ENCODE measurements at regions of chr10 and their contacts with region 1.

Region 1: GRCh38 chr10:57759777-57760176 is 507.9 kb downstream of the IPMK start:
- DNase-seq: no peak
- H3K4me3 ChIP-seq: no peak overlapping the region
- H3K27ac ChIP-seq: no peak overlapping the region
- H3K4me1 ChIP-seq: no peaks in the 10 kb centered on the region
- H3K27me3 ChIP-seq: no peaks in the 10 kb centered on the region
- CTCF ChIP-seq: no peak

Region 2: DNA sequence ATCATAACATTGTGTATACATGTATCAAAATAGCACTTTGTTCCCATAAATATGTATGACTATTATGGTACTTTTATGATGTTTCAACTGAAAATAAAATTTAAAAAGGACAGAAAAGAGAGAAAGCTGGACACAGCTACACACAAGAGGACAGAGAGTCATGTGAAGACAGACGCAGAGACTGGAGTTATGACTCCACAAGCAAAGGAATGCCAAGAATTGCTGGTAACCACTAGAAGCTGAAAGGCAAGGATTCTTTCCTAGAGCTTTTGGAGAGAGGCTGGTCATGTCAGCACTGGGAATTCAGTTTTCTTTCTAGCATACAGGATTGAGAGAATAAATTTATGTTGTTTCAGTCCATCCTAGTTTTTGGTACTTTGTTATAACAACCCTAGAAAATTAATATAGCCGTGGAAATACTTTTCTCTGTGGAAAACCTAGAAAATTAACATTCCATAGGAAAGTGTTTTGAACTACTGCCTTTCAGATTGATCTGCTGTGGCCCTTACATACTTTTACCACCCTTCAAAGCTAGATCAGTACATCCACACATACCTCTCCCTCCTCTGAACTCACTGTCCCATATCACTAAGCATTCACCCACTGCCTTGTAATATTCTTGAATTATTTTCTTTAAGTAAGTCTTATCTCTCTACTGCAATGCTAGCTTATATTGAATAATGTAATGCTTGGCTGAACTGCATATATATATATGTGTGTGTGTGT is 67.4 kb before region 1 on chr10:
- CTCF ChIA-PET with region 1: no interaction called
- dilution Hi-C with region 1: no loop called
- in situ Hi-C with region 1: no loop called
- intact Hi-C with region 1: no loop called
- DNase-seq: peak; percentile 78
- H3K4me3 ChIP-seq: no peak overlapping the region
- H3K27ac ChIP-seq: peak overlapping the region; percentile 81
- H3K4me1 ChIP-seq: peaks cover 19% of the 10 kb centered on the region
- H3K27me3 ChIP-seq: no peaks in the 10 kb centered on the region
- CTCF ChIP-seq: no peak

Region 3: GRCh38 chr10:57716886-57717285 is 42.9 kb before region 1 on chr10:
- CTCF ChIA-PET with region 1: no interaction called
- dilution Hi-C with region 1: no loop called
- in situ Hi-C with region 1: no loop called
- intact Hi-C with region 1: no loop called
- DNase-seq: peak; percentile 45
- H3K4me3 ChIP-seq: no peak overlapping the region
- H3K27ac ChIP-seq: no peak overlapping the region
- H3K4me1 ChIP-seq: no peaks in the 10 kb centered on the region
- H3K27me3 ChIP-seq: no peaks in the 10 kb centered on the region
- CTCF ChIP-seq: peak; percentile 56 to 75

Region 4: GRCh38 chr10:57787201-57787750 is 27.5 kb after region 1 on chr10:
- CTCF ChIA-PET with region 1: no interaction called
- dilution Hi-C with region 1: no loop called
- in situ Hi-C with region 1: no loop called
- intact Hi-C with region 1: loop called (anchors 1 kb)
- DNase-seq: no peak
- H3K4me3 ChIP-seq: no peak overlapping the region
- H3K27ac ChIP-seq: no peak overlapping the region
- H3K4me1 ChIP-seq: peaks cover 34% of the 10 kb centered on the region
- H3K27me3 ChIP-seq: no peaks in the 10 kb centered on the region
- CTCF ChIP-seq: no peak

Measured in mammary epithelial cell (primary cell).